ENCODE measurements at regions of chr1 and their contacts with region 1.

Region 1: GRCh38 chr1:108643492-108644335 is 17.2 kb downstream of the HENMT1 start:
- DNase-seq: peak; percentile 68
- H3K4me3 Mint-ChIP-seq: no peak overlapping the region
- H3K27ac Mint-ChIP-seq: peak overlapping the region; percentile 100
- H3K4me1 Mint-ChIP-seq: peaks cover 73% of the 10 kb centered on the region
- H3K27me3 Mint-ChIP-seq: no peaks in the 10 kb centered on the region

Region 2: GRCh38 chr1:108512239-108512981 is 131.3 kb before region 1 on chr1:
- CTCF ChIA-PET with region 1: interaction called, 39 read pairs
- DNase-seq: no peak
- H3K4me3 Mint-ChIP-seq: no peak overlapping the region
- H3K27ac Mint-ChIP-seq: no peak overlapping the region
- H3K4me1 Mint-ChIP-seq: no peaks in the 10 kb centered on the region
- H3K27me3 Mint-ChIP-seq: peaks cover 28% of the 10 kb centered on the region

Region 3: DNA sequence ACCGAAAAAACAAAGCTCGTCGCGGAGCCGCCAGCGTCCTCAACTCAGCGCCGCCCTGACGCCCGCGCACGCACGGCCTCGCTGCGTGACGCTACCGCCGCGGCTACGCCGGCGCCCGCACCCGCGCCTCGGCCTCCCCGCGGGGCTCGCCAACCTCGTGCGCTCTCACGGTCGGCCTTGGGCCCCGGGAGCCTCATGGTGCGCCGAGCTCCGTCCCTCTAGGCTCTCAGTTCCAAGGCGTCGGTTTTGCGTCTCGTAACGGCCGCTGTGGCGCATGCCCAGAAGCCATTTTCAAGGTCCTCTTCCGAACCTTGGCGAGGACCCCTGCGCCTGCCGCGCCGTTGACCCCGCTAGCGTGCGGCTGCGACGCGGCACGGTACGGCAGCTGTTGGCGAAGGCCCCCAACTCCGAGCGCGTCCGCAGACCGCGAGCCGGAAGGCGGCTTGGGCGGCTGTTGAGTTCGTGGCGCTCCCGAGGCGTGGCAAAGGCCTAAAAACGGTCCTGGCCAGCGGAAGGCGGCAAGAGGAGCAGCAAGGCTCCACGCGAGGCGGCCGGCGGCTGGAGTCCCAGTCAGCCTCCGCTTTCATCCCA is 17.4 kb after region 1 on chr1 and contains the start of gene HENMT1:
- CTCF ChIA-PET with region 1: interaction called, 14 read pairs
- DNase-seq: peak; percentile 86
- H3K4me3 Mint-ChIP-seq: peak within 1 kb of the TSS; percentile 81
- H3K27ac Mint-ChIP-seq: peak within 1 kb of the TSS; percentile 97
- H3K4me1 Mint-ChIP-seq: peaks cover 40% of the 10 kb centered on the region
- H3K27me3 Mint-ChIP-seq: no peaks in the 10 kb centered on the region

Region 4: DNA sequence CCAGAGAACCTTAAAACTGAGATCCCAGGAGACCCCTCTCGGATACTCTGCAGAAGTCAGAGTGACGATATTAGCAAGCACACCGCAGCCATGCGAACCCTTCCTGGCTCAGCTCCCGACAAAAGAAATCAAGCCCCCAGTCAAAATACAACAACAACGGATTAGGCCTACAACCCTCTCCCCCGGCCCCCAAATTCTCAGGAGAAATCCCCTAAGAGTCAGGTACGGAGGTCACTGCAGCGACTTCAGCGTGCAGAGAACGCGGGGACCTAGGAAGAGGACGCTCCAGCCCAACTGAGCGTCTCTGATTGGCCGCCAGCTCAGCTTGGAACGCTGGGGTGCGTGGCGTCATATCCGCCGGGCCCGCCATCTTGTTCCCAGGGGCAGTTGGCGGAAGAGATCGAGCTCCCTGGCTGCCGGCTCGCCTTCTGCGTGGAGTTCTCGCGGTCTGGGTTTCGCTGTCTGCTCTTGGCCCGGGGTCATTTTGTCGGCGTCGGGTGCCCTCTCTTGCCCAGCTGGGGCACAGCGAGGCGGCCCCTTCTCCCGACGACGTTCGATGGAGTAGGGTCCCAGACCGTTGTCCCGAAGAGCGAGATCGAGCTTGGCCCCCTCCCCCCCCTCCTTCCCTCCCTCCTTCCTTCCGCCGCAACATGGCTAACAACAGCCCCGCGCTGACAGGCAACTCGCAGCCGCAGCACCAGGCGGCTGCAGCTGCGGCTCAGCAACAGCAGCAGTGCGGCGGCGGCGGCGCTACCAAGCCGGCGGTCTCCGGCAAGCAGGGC is 48.4 kb after region 1 on chr1 and contains the start of gene PRPF38B:
- CTCF ChIA-PET with region 1: interaction called, 34 read pairs
- DNase-seq: peak; percentile 97
- H3K4me3 Mint-ChIP-seq: peak within 1 kb of the TSS; percentile 94
- H3K27ac Mint-ChIP-seq: peak within 1 kb of the TSS; percentile 98
- H3K4me1 Mint-ChIP-seq: peaks cover 40% of the 10 kb centered on the region
- H3K27me3 Mint-ChIP-seq: peaks cover 7% of the 10 kb centered on the region

Region 5: DNA sequence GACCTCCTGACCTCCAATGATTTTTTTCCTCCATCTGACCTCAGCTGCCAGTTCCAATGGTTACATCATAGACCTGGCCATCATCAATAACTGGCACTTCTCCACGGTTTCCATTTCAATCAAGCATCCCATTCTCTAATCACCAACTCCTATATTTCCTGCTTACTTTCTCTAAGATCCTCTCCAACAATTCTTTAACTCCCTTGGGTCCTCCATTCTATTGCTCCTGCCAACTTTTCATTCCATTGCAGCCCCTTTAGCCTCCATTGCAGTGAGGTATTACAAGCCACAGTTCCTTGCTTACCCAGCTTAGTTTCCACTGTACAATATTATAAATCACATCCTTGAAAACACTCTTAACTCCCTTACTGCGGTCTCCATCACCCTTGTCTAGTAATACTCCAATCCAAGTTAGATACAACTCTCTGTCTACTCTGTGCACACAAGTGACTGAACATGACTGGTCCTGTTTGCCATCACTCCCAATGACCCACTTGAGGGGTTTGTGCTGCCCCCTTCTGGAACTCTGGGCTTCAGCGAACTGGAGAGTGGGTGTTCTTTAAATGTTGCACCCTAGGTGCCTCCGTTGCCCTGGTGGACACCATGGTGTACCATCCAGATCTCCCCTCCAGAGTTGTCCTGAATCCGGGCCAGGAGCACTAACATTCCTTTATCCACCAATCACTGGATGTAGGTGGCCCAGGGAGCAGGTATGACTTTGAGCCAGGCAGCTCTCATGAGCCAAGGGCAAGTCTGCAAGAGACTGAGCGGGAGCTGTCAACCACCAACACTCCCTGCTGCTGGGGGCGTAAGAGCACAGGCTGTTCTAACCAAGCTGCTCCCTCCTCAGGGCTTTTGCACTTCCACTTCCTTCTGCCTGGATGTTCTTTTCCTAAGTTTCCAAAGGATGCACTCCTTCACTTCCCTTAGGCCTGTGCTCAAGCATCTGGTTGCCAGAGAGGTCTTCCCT is 65.3 kb after region 1 on chr1:
- CTCF ChIA-PET with region 1: interaction called, 14 read pairs
- DNase-seq: peak; percentile 75
- H3K4me3 Mint-ChIP-seq: no peak overlapping the region
- H3K27ac Mint-ChIP-seq: no peak overlapping the region
- H3K4me1 Mint-ChIP-seq: peaks cover 26% of the 10 kb centered on the region
- H3K27me3 Mint-ChIP-seq: peaks cover 22% of the 10 kb centered on the region

Measured in activated naive CD4-positive, alpha-beta T cell treated with anti-CD3 and anti-CD28 coated beads, Interleukin-2, amount 10 ng/mL, durations not matched to agents 7 days and 5 days (primary cell).